Thyroid gland (tissue), 4 donors: ENCODE measurements at regions of chr13 and their contacts with region 1.

Region 1: DNA sequence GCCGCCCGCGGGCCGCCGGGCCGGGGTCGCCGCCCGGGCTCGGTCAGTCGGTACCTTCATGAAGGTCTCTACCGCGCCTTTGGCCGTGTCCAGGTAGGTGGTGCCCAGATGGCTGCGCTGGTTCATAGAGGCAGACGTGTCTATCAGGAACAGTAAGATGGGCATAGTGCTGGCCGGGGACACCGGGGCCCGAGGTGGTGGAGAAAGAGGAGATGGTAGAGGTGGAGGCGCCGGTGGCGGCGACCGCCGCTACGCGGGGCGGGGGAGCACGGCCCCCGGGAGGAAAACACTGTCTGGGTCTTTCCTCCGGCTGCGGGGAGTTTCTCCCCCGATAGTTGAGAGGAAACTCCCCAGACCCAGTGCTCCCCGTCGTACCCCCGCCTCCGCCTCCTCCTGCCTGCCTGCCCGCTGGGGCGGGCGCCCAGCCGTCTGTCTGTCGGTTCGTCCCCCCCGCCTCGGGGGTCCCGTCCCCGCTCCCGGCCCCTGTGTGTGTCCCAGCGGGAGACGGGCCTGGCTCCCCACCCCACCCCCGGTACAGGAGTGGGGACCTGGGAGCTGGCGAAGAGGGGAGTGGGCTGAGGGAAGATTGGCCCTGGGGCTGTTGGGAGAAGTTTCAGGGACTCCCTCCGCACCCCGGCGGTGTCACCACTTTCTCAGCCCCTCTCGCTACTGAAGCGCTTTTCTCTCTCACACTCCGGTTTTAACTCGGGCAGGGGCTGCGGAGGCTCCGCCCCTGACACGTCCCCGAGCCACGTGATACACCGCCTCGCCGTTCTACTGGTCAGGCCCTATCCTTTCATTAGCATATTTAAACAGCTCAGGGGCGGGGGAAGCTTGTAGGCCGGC is at the start of gene INTS6:
- DNase-seq: peak; percentile 99
- H3K4me3 ChIP-seq: peak within 1 kb of the TSS; percentile 64 to 93 (median 77)
- H3K27ac ChIP-seq: peak within 1 kb of the TSS; percentile 99 to 100 (median 99)
- H3K4me1 ChIP-seq: peaks cover 6 to 11% of the 10 kb centered on the region in 2 donors
- H3K27me3 ChIP-seq: no peaks in the 10 kb centered on the region
- CTCF ChIP-seq: no peak
- POLR2A ChIP-seq: peak; percentile 99 to 100
- total RNA-seq, gene INTS6: 42.1 to 53.7 (median 45.4) TPM

Region 2: DNA sequence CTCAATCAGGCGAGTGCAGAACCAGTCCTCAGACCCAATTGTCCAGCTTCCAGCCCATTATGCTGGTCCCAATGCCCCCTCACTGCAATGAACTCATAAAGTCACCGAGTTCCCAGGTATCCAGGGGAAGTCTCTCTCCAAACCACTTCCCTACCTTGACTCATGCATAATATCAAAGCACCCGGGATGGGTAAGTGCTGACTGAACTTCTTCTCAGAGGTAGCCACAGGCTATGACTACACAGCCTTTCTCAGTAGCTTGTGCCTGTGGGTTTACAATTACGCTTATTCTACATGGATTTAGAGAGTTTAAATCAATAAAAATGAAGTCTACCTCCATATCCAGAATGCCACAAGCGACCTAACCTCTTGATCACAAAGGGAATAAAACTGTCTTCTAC is 339.8 kb before region 1 on chr13:
- intact Hi-C with region 1: no loop called
- DNase-seq: no peak
- H3K4me3 ChIP-seq: no peak overlapping the region
- H3K27ac ChIP-seq: no peak overlapping the region
- H3K4me1 ChIP-seq: no peaks in the 10 kb centered on the region
- H3K27me3 ChIP-seq: no peaks in the 10 kb centered on the region
- CTCF ChIP-seq: no peak
- POLR2A ChIP-seq: no peak

Region 3: GRCh38 chr13:51583875-51584730 is 131.5 kb after region 1 on chr13 and contains the start of gene WDFY2:
- intact Hi-C with region 1: loop called (anchors 5 kb)
- DNase-seq: peak; percentile 100
- H3K4me3 ChIP-seq: peak within 1 kb of the TSS; percentile 72 to 98 (median 89)
- H3K27ac ChIP-seq: peak within 1 kb of the TSS; percentile 84 to 96 (median 93)
- H3K4me1 ChIP-seq: peaks cover 17 to 22% of the 10 kb centered on the region in 2 donors
- H3K27me3 ChIP-seq: no peaks in the 10 kb centered on the region
- CTCF ChIP-seq: peak in 3 of 6 experiments; percentile 16 to 57 (median 20)
- POLR2A ChIP-seq: peak; percentile 93 to 98
- total RNA-seq, gene WDFY2: 15.8 to 23.9 (median 20.9) TPM

Region 4: GRCh38 chr13:51804295-51805172 is 351.9 kb after region 1 on chr13:
- intact Hi-C with region 1: loop called (anchors 5 kb)
- DNase-seq: peak; percentile 34 to 43
- H3K4me3 ChIP-seq: peak overlapping the region; percentile 57 to 95 (median 91)
- H3K27ac ChIP-seq: peak overlapping the region; percentile 98 to 100 (median 98)
- H3K4me1 ChIP-seq: peaks cover 32 to 33% of the 10 kb centered on the region in 2 donors
- H3K27me3 ChIP-seq: no peaks in the 10 kb centered on the region
- CTCF ChIP-seq: no peak
- POLR2A ChIP-seq: no peak